CD4-positive, alpha-beta memory T cell (primary cell): ENCODE measurements at regions of chr11 and their contacts with region 1.

Region 1: DNA sequence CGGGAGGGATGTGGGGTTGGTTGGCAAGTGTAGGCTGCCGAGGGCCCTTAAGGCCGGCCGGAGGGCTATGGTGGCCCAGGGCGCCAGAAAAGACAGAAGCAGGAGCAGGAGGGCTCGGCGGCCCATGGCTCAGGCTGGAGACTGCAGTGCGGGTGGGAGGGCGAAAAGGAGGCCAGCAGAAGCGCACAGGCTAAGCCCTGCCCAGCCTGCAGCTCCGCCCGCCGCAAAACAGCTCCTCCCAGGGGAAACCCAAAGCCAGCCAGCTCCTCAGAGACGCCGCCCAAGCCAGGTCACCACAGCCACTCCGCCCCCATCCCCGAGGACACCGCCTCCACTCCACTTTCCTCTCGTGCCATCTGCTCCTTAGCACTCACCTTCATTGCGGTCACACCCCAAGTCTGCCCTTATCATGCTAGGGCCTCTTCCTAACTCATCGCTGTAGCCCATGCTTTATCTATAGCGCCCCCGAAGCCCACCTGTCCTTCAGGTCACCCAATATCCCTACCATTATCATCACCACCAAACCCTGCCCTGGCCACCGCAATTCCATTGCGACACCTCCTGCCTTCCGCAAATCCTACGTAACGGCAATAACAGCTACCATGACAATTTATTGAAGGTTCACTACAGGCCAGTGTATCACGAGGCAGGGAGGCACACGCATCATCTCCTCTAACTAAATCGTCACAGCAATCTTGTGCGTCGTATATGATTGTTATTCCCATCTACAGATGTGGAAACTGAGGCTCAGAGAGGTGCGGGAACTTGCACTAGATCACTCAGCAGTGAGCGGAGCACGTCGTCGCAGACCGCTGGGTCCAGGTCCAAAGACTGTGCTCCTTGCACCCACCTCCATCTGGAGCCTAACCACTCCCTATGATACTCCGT is at the start of gene PRCP:
- DNase-seq: peak; percentile 90 to 98 (median 94)
- H3K4me3 ChIP-seq: peak within 1 kb of the TSS; percentile 67 to 82
- H3K4me3 Mint-ChIP-seq: peak within 1 kb of the TSS; percentile 95 to 100 (median 98)
- H3K27ac ChIP-seq: peak within 1 kb of the TSS; percentile 92
- H3K27ac Mint-ChIP-seq: peak within 1 kb of the TSS; percentile 95 to 100 (median 100)
- H3K4me1 ChIP-seq: peaks cover 29% of the 10 kb centered on the region
- H3K4me1 Mint-ChIP-seq: peaks cover 14 to 40% (median 34%) of the 10 kb centered on the region in 4 donors
- H3K27me3 ChIP-seq: no peaks in the 10 kb centered on the region
- H3K27me3 Mint-ChIP-seq: no peaks in the 10 kb centered on the region
- total RNA-seq, gene PRCP: 24.1 to 28.0 TPM

Region 2: GRCh38 chr11:82790723-82791484 is 109.6 kb before region 1 on chr11:
- CTCF ChIA-PET with region 1: no interaction called
- POLR2A ChIA-PET with region 1: no interaction called
- intact Hi-C with region 1: no loop called
- DNase-seq: no peak
- H3K4me3 ChIP-seq: no peak overlapping the region
- H3K4me3 Mint-ChIP-seq: no peak overlapping the region
- H3K27ac ChIP-seq: no peak overlapping the region
- H3K27ac Mint-ChIP-seq: no peak overlapping the region
- H3K4me1 ChIP-seq: no peaks in the 10 kb centered on the region
- H3K4me1 Mint-ChIP-seq: no peaks in the 10 kb centered on the region
- H3K27me3 ChIP-seq: no peaks in the 10 kb centered on the region
- H3K27me3 Mint-ChIP-seq: no peaks in the 10 kb centered on the region

Region 3: DNA sequence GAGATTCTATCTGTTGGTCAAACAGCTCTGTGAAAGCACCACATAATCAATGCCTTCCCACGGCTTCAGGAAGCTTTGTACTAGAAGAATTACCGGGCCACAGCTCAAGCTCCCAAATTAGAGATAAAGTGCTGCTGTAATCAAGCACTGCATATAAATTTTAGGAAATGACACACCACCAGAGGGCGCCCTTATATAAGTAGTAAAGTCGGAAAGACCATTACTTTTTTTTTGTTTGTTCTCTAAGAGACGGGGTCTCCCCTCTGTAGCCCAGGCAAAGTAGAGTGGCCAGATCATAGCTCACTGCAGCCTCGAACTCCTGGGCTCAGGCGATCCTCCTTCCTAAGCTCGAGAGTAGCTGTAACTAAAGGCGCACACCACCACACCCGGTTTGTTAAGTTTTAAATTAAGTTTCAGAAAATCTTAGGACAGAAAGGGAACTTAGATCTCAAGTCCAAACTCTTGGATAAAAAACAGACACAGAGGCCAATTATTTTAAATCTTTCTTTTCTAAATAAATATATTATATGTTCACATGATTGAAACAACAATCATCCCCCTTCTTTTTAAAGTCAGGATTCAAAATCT is 32.9 kb before region 1 on chr11:
- CTCF ChIA-PET with region 1: interaction called, 107 read pairs
- POLR2A ChIA-PET with region 1: interaction called, 6 read pairs
- intact Hi-C with region 1: loop called (anchors 1 kb)
- DNase-seq: peak; percentile 66 to 79 (median 69)
- H3K4me3 ChIP-seq: no peak overlapping the region
- H3K4me3 Mint-ChIP-seq: peak overlapping the region in 6 of 8 donors; percentile 40 to 77 (median 52)
- H3K27ac ChIP-seq: no peak overlapping the region
- H3K27ac Mint-ChIP-seq: peak overlapping the region in 4 of 7 donors; percentile 12 to 85 (median 46)
- H3K4me1 ChIP-seq: peaks cover 5% of the 10 kb centered on the region
- H3K4me1 Mint-ChIP-seq: peaks cover 11 to 24% (median 12%) of the 10 kb centered on the region in 4 donors
- H3K27me3 ChIP-seq: no peaks in the 10 kb centered on the region
- H3K27me3 Mint-ChIP-seq: peaks cover 0 to 2% of the 10 kb centered on the region in 2 donors

Region 4: DNA sequence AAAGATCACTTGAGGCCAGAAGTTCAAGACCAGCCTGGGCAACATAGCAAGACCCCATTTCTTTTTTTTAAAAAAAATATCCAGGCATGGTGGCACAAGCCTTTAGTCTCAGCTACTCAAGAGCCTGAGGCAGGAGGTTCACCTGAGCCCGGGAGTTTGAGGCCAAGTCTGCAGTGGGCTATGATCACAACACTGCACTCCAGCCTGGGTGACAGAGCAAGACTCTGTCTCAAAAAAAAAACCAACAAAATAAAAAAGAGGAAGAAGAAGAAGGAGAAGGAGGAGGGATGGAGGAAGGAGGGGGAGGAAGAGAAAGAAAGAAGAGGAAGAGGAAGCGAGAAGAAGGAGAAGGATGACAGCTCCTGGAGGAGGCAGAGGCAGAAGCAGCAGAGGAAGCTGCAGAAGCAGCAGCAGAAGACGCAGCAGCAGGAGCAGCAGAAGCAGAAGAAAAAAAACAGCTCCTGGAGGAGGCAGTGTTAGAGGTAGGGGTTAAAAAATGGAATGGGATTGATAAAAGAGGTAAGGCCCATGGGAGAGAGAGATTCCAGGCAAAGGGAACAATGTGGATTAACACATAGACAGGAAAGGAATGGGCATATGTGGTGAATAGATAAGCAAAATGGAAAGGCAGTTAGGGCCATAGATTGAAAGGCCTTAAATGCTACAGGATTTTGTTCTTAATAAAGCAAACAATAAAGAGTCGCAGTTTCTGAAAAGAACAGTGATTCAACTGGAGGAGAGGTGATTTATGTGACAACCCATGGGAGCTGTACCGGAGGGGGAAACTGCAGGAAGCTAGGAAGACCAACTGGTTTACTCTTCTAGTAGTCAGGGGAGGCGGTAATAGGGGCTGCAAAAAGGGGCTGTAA is 11.2 kb before region 1 on chr11:
- CTCF ChIA-PET with region 1: interaction called, 3 read pairs
- POLR2A ChIA-PET with region 1: interaction called, 18 read pairs
- intact Hi-C with region 1: no loop called
- DNase-seq: no peak
- H3K4me3 ChIP-seq: no peak overlapping the region
- H3K4me3 Mint-ChIP-seq: no peak overlapping the region
- H3K27ac ChIP-seq: no peak overlapping the region
- H3K27ac Mint-ChIP-seq: no peak overlapping the region
- H3K4me1 ChIP-seq: no peaks in the 10 kb centered on the region
- H3K4me1 Mint-ChIP-seq: peaks cover 0 to 6% (median 2%) of the 10 kb centered on the region in 4 donors
- H3K27me3 ChIP-seq: no peaks in the 10 kb centered on the region
- H3K27me3 Mint-ChIP-seq: no peaks in the 10 kb centered on the region

Region 5: GRCh38 chr11:82959987-82960778 is 59.7 kb after region 1 on chr11:
- CTCF ChIA-PET with region 1: interaction called, 6 read pairs
- POLR2A ChIA-PET with region 1: interaction called, 32 read pairs
- intact Hi-C with region 1: loop called (anchors 1 kb)
- DNase-seq: peak; percentile 77 to 85 (median 82)
- H3K4me3 ChIP-seq: peak overlapping the region; percentile 13 to 39
- H3K4me3 Mint-ChIP-seq: peak overlapping the region; percentile 60 to 89 (median 80)
- H3K27ac ChIP-seq: peak overlapping the region; percentile 55
- H3K27ac Mint-ChIP-seq: peak overlapping the region; percentile 86 to 96 (median 95)
- H3K4me1 ChIP-seq: peaks cover 75% of the 10 kb centered on the region
- H3K4me1 Mint-ChIP-seq: peaks cover 57 to 88% (median 74%) of the 10 kb centered on the region in 4 donors
- H3K27me3 ChIP-seq: no peaks in the 10 kb centered on the region
- H3K27me3 Mint-ChIP-seq: no peaks in the 10 kb centered on the region

Region 6: DNA sequence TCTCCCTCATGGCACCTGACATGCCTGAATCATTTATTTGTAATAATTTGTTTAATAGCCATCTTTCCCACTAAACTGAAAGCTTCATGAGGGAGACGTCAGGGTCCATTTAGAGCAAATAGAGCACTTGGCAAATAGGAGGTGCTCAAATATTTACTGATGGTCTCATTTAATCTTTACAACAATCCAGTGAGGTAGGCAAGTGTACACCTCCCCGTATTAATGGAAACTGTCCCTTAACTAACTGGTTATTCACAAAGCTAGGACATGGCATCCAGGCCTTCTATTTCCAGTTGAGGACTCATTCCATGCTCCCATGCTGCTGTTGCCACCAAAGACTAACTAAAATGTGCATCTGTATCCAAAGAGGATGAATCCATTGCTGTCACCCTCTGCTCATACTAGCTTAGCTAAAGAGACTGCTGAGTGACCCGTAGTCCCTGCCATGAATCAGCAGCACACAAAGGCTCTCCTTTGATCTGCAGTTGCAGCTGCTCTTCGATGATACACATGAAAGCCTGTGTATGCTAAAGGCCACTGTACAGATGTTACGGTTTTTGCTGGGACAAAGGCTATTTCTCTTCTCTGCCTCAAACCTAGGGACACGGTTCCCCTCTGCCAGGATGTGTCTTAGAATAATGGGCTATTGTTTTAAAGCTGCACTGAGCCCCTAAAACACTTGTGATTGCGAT is 88.6 kb after region 1 on chr11:
- CTCF ChIA-PET with region 1: interaction called, 12 read pairs
- POLR2A ChIA-PET with region 1: interaction called, 3 read pairs
- intact Hi-C with region 1: no loop called
- DNase-seq: no peak
- H3K4me3 ChIP-seq: no peak overlapping the region
- H3K4me3 Mint-ChIP-seq: no peak overlapping the region
- H3K27ac ChIP-seq: no peak overlapping the region
- H3K27ac Mint-ChIP-seq: peak overlapping the region in 2 of 7 donors; percentile 14 to 21
- H3K4me1 ChIP-seq: no peaks in the 10 kb centered on the region
- H3K4me1 Mint-ChIP-seq: peaks cover 0 to 6% (median under 1%) of the 10 kb centered on the region in 4 donors
- H3K27me3 ChIP-seq: no peaks in the 10 kb centered on the region
- H3K27me3 Mint-ChIP-seq: no peaks in the 10 kb centered on the region

Region 7: DNA sequence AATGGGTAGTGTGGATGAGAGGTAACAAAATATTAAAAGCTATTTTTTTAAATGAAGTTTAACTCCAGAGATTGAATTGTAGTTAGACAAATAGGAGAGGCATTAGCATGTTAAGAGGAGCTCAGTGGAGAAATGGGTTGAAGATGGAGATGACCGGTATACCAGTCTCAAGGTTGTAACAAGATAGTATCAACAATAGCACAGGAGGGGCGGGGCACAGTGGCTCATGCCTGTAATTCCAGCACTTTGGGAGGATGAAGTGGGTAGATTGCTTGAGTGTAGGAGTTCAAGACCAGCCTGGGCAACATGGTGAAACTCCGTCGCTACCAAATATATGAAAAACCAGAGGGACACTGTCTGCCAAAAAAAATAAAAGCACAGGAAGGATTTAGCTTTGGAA is 286.9 kb after region 1 on chr11:
- CTCF ChIA-PET with region 1: no interaction called
- POLR2A ChIA-PET with region 1: interaction called, 16 read pairs
- intact Hi-C with region 1: no loop called
- DNase-seq: no peak
- H3K4me3 ChIP-seq: no peak overlapping the region
- H3K4me3 Mint-ChIP-seq: no peak overlapping the region
- H3K27ac ChIP-seq: no peak overlapping the region
- H3K27ac Mint-ChIP-seq: peak overlapping the region in 4 of 7 donors; percentile 45 to 80 (median 64)
- H3K4me1 ChIP-seq: peaks cover 11% of the 10 kb centered on the region
- H3K4me1 Mint-ChIP-seq: peaks cover 7 to 14% (median 14%) of the 10 kb centered on the region in 4 donors
- H3K27me3 ChIP-seq: no peaks in the 10 kb centered on the region
- H3K27me3 Mint-ChIP-seq: no peaks in the 10 kb centered on the region

Region 8: GRCh38 chr11:83249972-83250593 is 349.6 kb after region 1 on chr11:
- CTCF ChIA-PET with region 1: interaction called, 30 read pairs
- POLR2A ChIA-PET with region 1: interaction called, 5 read pairs
- intact Hi-C with region 1: no loop called
- DNase-seq: peak in 4 of 5 donors; percentile 28 to 43 (median 38)
- H3K4me3 ChIP-seq: no peak overlapping the region
- H3K4me3 Mint-ChIP-seq: no peak overlapping the region
- H3K27ac ChIP-seq: no peak overlapping the region
- H3K27ac Mint-ChIP-seq: no peak overlapping the region
- H3K4me1 ChIP-seq: no peaks in the 10 kb centered on the region
- H3K4me1 Mint-ChIP-seq: peaks cover 0 to 4% (median 2%) of the 10 kb centered on the region in 4 donors
- H3K27me3 ChIP-seq: no peaks in the 10 kb centered on the region
- H3K27me3 Mint-ChIP-seq: no peaks in the 10 kb centered on the region